Common myeloid progenitor, CD34-positive (primary cell): ENCODE measurements at regions of chr14 and their contacts with region 1.

Region 1: DNA sequence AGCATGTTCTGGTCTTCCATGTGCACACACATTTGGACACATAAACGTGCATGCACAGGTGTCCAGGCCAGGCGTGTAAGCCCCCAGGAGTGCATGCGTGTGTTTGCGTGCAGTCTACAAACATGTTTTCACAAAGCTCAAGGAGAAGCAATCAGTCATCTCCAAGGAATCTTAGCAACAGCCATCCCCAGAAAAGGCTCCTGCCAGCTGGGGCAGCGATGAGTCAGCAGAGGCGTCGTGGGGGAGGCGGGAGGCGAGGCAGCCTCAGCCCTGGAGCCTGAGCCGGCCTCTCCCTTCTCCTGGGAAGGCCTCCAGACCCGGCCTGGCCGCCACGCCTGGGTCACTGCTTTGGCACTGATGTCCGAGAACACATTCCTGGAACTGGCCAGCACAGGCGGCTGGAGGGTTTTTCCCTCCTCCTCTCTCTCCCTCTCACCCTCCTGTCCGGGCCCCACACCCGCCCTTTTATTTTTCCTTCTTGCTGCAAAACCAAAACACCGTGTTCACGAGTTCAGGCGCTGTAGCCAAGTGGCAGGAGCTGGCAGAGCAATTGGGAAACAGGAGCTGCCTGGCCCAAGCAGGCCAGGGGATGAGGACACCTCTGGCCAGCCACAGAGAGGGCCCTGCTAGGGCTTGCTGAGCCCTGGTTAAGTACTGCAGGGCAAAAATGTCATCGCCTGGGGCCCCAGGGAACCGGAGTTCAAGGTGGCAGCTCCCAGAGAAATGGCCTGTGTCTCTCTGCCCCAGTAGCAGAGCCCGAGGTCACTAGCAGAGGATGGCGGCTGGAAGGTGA is 92.7 kb downstream of the LRRC74A start:
- DNase-seq: peak in 2 of 3 donors; percentile 82 to 85
- H3K4me3 ChIP-seq: peak overlapping the region in 2 of 7 experiments; percentile 8 to 37
- H3K27ac ChIP-seq: peak overlapping the region; percentile 11 to 50
- H3K4me1 ChIP-seq: peaks cover 8 to 94% (median 81%) of the 10 kb centered on the region in 4 experiments
- H3K27me3 ChIP-seq: no peaks in the 10 kb centered on the region

Region 2: DNA sequence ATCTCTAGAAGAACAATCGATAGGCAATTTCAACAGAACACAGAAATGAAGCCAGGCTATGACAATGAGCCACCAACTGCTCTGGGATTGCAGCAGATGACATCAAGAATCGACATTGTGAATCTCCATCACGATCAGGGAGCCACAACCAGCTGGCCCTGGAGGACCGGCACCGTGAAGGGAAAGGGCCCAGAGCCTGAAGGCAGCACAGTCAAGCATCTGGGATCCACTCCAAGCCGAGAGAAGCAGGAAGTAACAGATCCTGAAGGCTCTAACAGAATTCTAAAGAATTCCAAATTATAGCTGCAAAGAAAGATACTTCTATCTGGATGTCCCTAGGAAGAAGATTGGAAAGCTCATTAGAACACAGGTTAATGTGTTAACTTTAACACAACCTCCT is 31.8 kb before region 1 on chr14:
- CTCF ChIA-PET with region 1: interaction called, 12 read pairs
- POLR2A ChIA-PET with region 1: no interaction called
- DNase-seq: no peak
- H3K4me3 ChIP-seq: no peak overlapping the region
- H3K27ac ChIP-seq: no peak overlapping the region
- H3K4me1 ChIP-seq: peaks cover 0 to 20% (median 15%) of the 10 kb centered on the region in 4 experiments
- H3K27me3 ChIP-seq: no peaks in the 10 kb centered on the region

Region 3: GRCh38 chr14:76947078-76947837 is 28.3 kb after region 1 on chr14:
- CTCF ChIA-PET with region 1: interaction called, 18 read pairs
- POLR2A ChIA-PET with region 1: no interaction called
- DNase-seq: peak; percentile 83 to 90 (median 88)
- H3K4me3 ChIP-seq: peak overlapping the region in 2 of 7 experiments; percentile 12 to 45
- H3K27ac ChIP-seq: no peak overlapping the region
- H3K4me1 ChIP-seq: peaks cover 3 to 37% (median 16%) of the 10 kb centered on the region in 4 experiments
- H3K27me3 ChIP-seq: no peaks in the 10 kb centered on the region

Region 4: GRCh38 chr14:76962303-76962660 is 43.3 kb after region 1 on chr14:
- CTCF ChIA-PET with region 1: interaction called, 16 read pairs
- POLR2A ChIA-PET with region 1: no interaction called
- DNase-seq: no peak
- H3K4me3 ChIP-seq: peak overlapping the region in 6 of 7 experiments; percentile 38 to 72 (median 62)
- H3K27ac ChIP-seq: peak overlapping the region in 1 of 2 experiments; percentile 54
- H3K4me1 ChIP-seq: peaks cover 5 to 61% (median 41%) of the 10 kb centered on the region in 4 experiments
- H3K27me3 ChIP-seq: no peaks in the 10 kb centered on the region

Region 5: DNA sequence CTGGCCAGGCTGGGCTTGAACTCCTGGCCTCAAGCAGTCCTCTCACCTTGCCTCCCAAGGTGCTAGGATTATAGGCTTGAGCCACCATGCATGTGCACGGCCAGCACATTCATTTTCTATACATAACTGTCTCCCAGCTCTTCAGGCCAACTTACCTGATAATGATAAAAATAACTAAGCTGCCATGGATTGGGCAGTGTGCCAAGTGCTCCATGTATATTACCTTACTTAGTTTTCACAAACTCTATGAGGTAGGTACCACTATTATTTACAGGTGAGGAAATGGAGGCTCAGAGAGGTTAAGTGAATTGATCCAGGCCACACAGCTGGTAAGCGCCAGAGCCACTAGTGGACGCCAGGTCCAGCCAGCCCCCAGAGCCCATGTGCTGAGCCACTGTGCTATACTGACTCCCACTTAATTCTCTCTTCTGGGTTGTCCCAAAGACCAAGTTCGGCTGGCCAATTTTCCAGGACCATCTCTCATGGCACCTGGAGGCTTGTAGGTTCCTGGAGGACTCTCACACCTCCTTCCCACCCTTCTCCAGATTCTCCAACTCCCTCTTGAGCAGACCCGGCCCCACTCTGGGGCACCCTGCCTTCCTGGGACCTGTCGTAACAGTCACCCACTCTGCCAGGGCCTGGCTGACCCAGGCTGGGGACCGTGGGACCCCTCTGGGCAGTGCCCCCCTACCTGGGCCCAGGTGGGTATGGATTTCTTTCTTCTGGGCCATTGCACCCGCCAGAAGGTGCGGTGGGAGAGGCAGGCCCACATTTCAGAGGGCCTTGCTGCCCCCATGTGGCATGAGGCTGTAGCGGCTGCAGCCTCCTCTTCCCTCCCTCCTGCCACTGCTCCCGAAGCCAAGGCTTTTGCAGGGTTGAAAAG is 148.9 kb after region 1 on chr14:
- CTCF ChIA-PET with region 1: interaction called, 55 read pairs
- POLR2A ChIA-PET with region 1: no interaction called
- DNase-seq: peak; percentile 48 to 66 (median 63)
- H3K4me3 ChIP-seq: no peak overlapping the region
- H3K27ac ChIP-seq: no peak overlapping the region
- H3K4me1 ChIP-seq: peaks cover 0 to 23% (median 9%) of the 10 kb centered on the region in 4 experiments
- H3K27me3 ChIP-seq: no peaks in the 10 kb centered on the region